ENCODE measurements at regions of chr6 and their contacts with region 1.

Region 1: GRCh38 chr6:151323791-151324487 is 67.4 kb downstream of the ZBTB2 start:
- DNase-seq: peak; percentile 77 to 93 (median 87)
- ATAC-seq: peak; percentile 94
- H3K4me3 ChIP-seq: no peak overlapping the region
- H3K27ac ChIP-seq: peak overlapping the region in 1 of 2 donors; percentile 45
- H3K4me1 ChIP-seq: peaks cover 7 to 30% of the 10 kb centered on the region in 2 donors
- H3K27me3 ChIP-seq: peaks cover 0 to 27% of the 10 kb centered on the region in 2 donors
- CTCF ChIP-seq: peak; percentile 94 to 96

Region 2: GRCh38 chr6:151004415-151005024 is 319.4 kb before region 1 on chr6:
- intact Hi-C with region 1: loop called in 1 of 2 experiments (anchors 5 kb)
- DNase-seq: peak in 2 of 4 donors; percentile 72 to 82
- ATAC-seq: peak; percentile 79
- H3K4me3 ChIP-seq: no peak overlapping the region
- H3K27ac ChIP-seq: peak overlapping the region; percentile 80
- H3K4me1 ChIP-seq: peaks cover 8 to 32% of the 10 kb centered on the region in 2 donors
- H3K27me3 ChIP-seq: no peaks in the 10 kb centered on the region
- CTCF ChIP-seq: no peak

Measured in left lung (tissue), 14 donors.